Pancreas (tissue), 10 donors: ENCODE measurements at regions of chr11 and their contacts with region 1.

Region 1: DNA sequence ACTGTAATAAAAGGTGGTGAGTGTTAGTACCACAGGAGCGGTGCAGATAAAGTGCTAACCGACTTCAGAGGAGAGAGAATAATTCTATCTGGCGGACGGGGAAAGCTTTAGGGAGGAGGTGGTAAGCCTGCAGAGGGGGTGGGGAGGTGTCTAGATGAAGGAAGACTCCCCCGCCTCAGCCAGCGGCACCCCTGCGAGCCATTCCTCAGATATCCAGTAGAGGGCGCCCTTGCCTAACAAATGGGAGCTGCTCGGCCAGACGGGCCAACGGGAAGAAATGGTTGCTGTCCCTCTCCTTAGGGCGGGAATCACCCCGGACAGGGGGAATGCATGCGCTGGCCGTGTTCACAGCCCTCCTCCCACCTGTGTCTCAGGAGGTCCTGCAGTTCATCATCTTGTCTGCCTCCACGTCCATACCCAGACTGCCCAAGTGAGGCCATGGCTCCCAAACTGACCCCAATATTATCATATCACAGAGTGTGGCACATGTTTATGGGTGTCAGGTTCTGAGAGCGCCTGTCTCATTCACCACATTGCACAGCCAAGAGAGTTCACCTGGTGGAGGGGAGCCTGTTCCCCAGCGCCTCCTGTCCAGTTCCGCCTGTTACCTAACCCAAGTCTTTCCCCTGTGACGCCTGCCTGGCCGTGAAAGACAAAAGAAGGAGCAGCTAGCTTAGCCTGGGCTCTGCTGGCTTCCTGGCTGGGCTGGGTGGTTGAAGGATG is 85.5 kb downstream of the ST3GAL4 start:
- DNase-seq: peak; percentile 58 to 91 (median 83)
- ATAC-seq: peak; percentile 78 to 98 (median 94)
- H3K4me3 ChIP-seq: no peak overlapping the region
- H3K27ac ChIP-seq: no peak overlapping the region
- H3K4me1 ChIP-seq: no peaks in the 10 kb centered on the region
- H3K27me3 ChIP-seq: peaks cover 0 to 4% (median 2%) of the 10 kb centered on the region in 4 donors
- CTCF ChIP-seq: peak; percentile 93 to 98 (median 94)

Region 2: DNA sequence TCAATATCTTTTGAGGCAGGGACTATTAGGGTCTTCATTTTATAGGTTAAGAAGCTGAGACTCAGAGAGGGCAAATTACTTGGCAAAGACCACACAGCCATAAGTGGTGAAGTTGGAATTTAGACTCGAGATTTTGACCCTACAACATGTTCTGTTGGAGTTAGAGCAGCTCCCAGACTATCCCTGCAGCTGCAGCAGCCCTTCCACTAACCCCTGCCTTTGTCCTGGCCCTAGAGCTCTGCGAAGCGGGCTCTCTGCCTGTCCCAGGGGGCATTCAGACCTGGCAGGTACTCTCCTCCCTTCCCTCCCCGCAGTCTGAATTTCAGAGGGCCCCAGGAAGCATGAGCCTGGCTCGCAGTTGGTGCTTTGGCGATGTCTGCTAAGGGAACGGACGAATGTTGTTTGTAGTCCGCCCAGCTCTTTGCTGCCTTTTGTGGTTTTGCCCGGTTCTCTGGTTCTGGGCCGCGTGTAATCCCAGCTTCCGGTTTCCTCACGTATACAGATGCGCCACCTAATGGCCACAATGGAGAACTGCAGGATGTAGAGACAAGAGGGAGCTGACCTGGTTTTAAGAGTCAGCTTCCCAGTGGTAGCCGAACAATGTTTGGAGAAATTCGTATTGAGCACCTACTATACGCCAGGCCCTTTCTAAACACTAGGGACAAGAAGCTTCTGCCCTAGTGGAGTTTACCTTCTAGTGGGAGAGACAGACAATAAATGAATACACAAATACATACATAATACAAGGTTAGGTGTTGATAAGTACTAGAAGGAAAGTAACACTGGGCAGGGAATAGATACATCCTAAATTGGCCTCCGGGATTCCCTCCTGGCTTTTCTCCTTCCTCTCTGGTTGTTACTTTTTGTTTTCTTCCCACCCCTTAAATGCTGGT is 39.7 kb after region 1 on chr11:
- intact Hi-C with region 1: loop called in 1 of 3 experiments (anchors 5 kb)
- DNase-seq: peak in 4 of 6 donors; percentile 67 to 83 (median 78)
- ATAC-seq: peak; percentile 88 to 99 (median 96)
- H3K4me3 ChIP-seq: no peak overlapping the region
- H3K27ac ChIP-seq: peak overlapping the region in 1 of 4 donors; percentile 25
- H3K4me1 ChIP-seq: peaks cover 0 to 4% (median 0%) of the 10 kb centered on the region in 3 donors
- H3K27me3 ChIP-seq: no peaks in the 10 kb centered on the region
- CTCF ChIP-seq: peak; percentile 84 to 94 (median 89)

Region 3: DNA sequence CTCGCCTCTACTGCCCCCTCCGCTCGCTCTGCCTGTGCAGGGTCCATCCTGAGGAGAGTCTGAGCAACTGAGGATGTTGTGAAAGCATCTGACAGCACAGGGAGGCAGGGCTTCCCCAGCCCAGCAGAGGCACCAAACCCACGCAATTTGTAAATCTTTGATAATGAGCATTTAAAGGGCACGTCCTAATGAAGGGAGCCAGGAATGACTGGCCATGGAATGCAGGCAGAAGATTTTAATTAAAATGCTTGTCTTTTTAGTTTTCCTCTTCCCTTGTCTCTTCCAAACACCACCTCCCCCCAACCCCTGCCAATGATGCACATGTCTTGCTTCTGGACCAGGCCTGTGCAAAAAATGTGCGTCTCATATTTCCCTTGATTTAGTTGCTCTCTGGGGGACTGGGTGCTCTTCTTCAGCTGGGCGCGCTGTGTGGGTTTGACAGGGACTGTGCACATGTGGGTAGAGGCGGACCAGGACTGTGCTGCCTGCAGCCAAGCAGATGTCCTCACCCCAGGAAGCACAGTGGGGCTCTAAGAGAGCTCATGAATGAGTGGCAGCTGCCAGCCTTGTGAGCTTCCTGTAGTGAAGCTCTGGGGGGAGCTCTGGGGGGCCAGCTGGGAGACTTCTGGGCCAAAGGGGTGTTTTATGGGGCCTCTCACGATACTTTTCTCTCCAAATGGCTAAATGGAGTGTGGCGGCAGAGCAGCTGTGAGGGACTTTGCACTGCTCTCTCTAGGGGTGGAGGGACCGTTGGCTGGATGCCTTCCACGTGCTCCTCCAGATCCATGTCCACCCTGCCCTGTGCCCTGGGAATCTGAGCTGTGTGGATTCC is 188.1 kb after region 1 on chr11:
- intact Hi-C with region 1: no loop called
- DNase-seq: no peak
- ATAC-seq: peak in 1 of 4 donors; percentile 54
- H3K4me3 ChIP-seq: no peak overlapping the region
- H3K27ac ChIP-seq: no peak overlapping the region
- H3K4me1 ChIP-seq: peaks cover 9 to 13% (median 12%) of the 10 kb centered on the region in 3 donors
- H3K27me3 ChIP-seq: no peaks in the 10 kb centered on the region
- CTCF ChIP-seq: no peak

Region 4: GRCh38 chr11:126989942-126990715 is 549.2 kb after region 1 on chr11:
- intact Hi-C with region 1: loop called in 1 of 3 experiments (anchors 10 kb)
- DNase-seq: peak; percentile 35 to 90 (median 75)
- ATAC-seq: peak; percentile 77 to 96 (median 95)
- H3K4me3 ChIP-seq: no peak overlapping the region
- H3K27ac ChIP-seq: no peak overlapping the region
- H3K4me1 ChIP-seq: no peaks in the 10 kb centered on the region
- H3K27me3 ChIP-seq: no peaks in the 10 kb centered on the region
- CTCF ChIP-seq: peak; percentile 81 to 95 (median 93)

Region 5: GRCh38 chr11:127345819-127346459 is 905.0 kb after region 1 on chr11:
- intact Hi-C with region 1: loop called in 1 of 3 experiments (anchors 10 kb)
- DNase-seq: peak in 5 of 6 donors; percentile 6 to 56 (median 21)
- ATAC-seq: peak in 3 of 4 donors; percentile 43 to 59 (median 51)
- H3K4me3 ChIP-seq: no peak overlapping the region
- H3K27ac ChIP-seq: no peak overlapping the region
- H3K4me1 ChIP-seq: no peaks in the 10 kb centered on the region
- H3K27me3 ChIP-seq: no peaks in the 10 kb centered on the region
- CTCF ChIP-seq: peak; percentile 40 to 66 (median 48)